B cell (primary cell): ENCODE measurements at regions of chr21 and their contacts with region 1.

Region 1: DNA sequence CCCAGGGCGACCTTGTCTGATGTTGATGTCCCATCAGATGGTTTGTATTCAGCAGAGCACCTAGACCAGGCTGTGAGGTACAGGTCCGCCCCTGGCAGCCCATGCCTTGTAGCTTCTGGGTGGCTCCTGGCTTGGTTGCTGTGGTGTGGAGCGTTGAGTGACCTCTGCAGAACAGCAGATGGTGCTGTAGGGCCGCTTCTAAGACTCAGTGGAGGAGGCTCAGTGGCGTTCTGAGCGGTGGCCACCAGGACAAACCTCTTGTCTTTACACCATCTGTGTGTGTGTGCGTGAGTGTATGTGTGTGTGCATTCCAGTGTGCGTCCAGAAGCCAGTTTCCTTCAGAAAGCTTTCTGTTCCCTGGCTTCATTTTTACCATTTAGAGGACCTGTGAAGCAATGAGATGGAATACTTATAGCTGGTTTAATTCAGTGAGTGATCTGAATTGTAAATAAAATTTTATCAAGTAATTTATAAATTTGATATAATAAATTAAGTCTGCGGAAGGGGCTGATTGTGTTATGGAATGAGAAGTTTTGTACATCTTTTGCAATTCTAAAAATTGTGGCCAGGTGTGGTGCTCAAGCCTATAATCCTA is 66.1 kb downstream of the ADARB1 start:
- DNase-seq: peak; percentile 80
- ATAC-seq: peak; percentile 93
- H3K4me3 ChIP-seq: no peak overlapping the region
- H3K4me3 Mint-ChIP-seq: no peak overlapping the region
- H3K27ac ChIP-seq: no peak overlapping the region
- H3K27ac Mint-ChIP-seq: peak overlapping the region; percentile 57
- H3K4me1 ChIP-seq: peaks cover 0 to 8% of the 10 kb centered on the region in 2 donors
- H3K4me1 Mint-ChIP-seq: peaks cover 17% of the 10 kb centered on the region
- H3K27me3 ChIP-seq: no peaks in the 10 kb centered on the region
- H3K27me3 Mint-ChIP-seq: no peaks in the 10 kb centered on the region
- CTCF ChIP-seq: peak; percentile 71

Region 2: DNA sequence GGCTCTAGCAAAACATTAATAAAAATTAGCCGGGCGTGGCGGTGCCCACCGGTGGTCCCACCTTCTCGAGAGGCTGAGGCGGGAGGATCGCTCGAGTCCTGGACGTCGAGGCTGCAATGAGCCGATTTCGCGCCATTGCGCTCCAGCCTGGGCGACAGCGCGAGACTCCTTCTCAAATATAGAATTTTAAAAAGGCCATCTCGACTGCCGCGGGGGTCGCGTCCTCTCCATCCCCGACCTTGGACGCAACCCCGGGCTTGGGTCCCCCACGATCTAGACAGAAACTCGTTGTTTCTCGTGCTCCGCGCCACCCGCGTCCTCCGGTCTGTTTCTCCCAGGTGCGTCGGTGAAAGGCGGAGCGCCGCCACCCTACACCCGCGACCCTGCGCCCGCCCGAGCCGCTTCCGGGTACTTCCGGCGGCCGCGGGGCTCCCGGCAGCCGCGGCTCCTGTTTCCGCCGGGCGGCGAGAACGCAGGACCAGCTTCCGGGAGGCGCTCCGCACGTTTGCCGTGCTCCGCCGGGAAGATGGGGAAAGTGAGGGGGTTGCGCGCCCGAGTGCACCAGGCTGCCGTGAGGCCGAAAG is 200.8 kb before region 1 on chr21 and contains the start of gene SLX9:
- CTCF ChIA-PET with region 1: interaction called, 355 read pairs
- POLR2A ChIA-PET with region 1: no interaction called
- intact Hi-C with region 1: no loop called
- DNase-seq: peak; percentile 84
- ATAC-seq: peak; percentile 87
- H3K4me3 ChIP-seq: peak within 1 kb of the TSS; percentile 54 to 80 (median 74)
- H3K4me3 Mint-ChIP-seq: peak within 1 kb of the TSS; percentile 89
- H3K27ac ChIP-seq: peak within 1 kb of the TSS in 1 of 2 donors; percentile 57
- H3K27ac Mint-ChIP-seq: peak within 1 kb of the TSS; percentile 86
- H3K4me1 ChIP-seq: peaks cover 26 to 40% of the 10 kb centered on the region in 2 donors
- H3K4me1 Mint-ChIP-seq: peaks cover 43% of the 10 kb centered on the region
- H3K27me3 ChIP-seq: no peaks in the 10 kb centered on the region
- H3K27me3 Mint-ChIP-seq: no peaks in the 10 kb centered on the region
- CTCF ChIP-seq: no peak
- total RNA-seq, gene SLX9: 12.6 and 15.9 TPM in 2 replicates

Region 3: GRCh38 chr21:45074048-45074817 is 66.2 kb before region 1 on chr21 and contains the start of gene ADARB1:
- CTCF ChIA-PET with region 1: interaction called, 38 read pairs
- POLR2A ChIA-PET with region 1: no interaction called
- intact Hi-C with region 1: no loop called
- DNase-seq: peak; percentile 84
- ATAC-seq: peak; percentile 87
- H3K4me3 ChIP-seq: peak within 1 kb of the TSS; percentile 69 to 86 (median 75)
- H3K4me3 Mint-ChIP-seq: peak within 1 kb of the TSS; percentile 90
- H3K27ac ChIP-seq: peak within 1 kb of the TSS in 1 of 2 donors; percentile 51
- H3K27ac Mint-ChIP-seq: peak within 1 kb of the TSS; percentile 84
- H3K4me1 ChIP-seq: peaks cover 37 to 44% of the 10 kb centered on the region in 2 donors
- H3K4me1 Mint-ChIP-seq: peaks cover 38% of the 10 kb centered on the region
- H3K27me3 ChIP-seq: no peaks in the 10 kb centered on the region
- H3K27me3 Mint-ChIP-seq: no peaks in the 10 kb centered on the region
- CTCF ChIP-seq: no peak
- total RNA-seq, gene ADARB1: 17.1 and 23.2 TPM in 2 replicates

Region 4: DNA sequence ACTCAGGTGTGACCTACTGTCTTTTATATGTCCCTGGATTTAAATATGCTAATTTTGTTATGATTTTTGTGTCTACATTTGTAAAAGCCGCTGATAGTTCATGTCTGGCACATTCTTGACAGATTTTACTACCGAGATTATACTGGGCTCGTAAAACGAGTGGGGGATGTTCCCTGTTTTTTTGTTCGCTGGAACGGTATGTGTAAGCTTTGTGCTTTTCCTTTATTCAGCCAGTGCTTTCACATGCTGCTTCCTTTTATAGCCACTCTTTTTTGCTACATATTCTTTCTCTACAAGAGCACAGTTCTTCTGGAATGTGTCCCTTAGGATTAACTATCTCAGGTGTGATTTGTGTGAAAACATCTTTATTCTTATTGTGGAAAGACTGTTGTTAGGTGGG is 19.5 kb before region 1 on chr21:
- CTCF ChIA-PET with region 1: interaction called, 183 read pairs
- POLR2A ChIA-PET with region 1: no interaction called
- intact Hi-C with region 1: no loop called
- DNase-seq: no peak
- ATAC-seq: no peak
- H3K4me3 ChIP-seq: no peak overlapping the region
- H3K4me3 Mint-ChIP-seq: no peak overlapping the region
- H3K27ac ChIP-seq: no peak overlapping the region
- H3K27ac Mint-ChIP-seq: no peak overlapping the region
- H3K4me1 ChIP-seq: peaks cover 72 to 78% of the 10 kb centered on the region in 2 donors
- H3K4me1 Mint-ChIP-seq: peaks cover 86% of the 10 kb centered on the region
- H3K27me3 ChIP-seq: no peaks in the 10 kb centered on the region
- H3K27me3 Mint-ChIP-seq: no peaks in the 10 kb centered on the region
- CTCF ChIP-seq: no peak

Region 5: GRCh38 chr21:45158491-45159423 is 18.3 kb after region 1 on chr21:
- CTCF ChIA-PET with region 1: interaction called, 36 read pairs
- POLR2A ChIA-PET with region 1: interaction called, 3 read pairs
- intact Hi-C with region 1: no loop called
- DNase-seq: peak; percentile 53
- ATAC-seq: peak; percentile 61
- H3K4me3 ChIP-seq: no peak overlapping the region
- H3K4me3 Mint-ChIP-seq: no peak overlapping the region
- H3K27ac ChIP-seq: peak overlapping the region in 1 of 2 donors; percentile 53
- H3K27ac Mint-ChIP-seq: peak overlapping the region; percentile 62
- H3K4me1 ChIP-seq: peaks cover 24 to 25% of the 10 kb centered on the region in 2 donors
- H3K4me1 Mint-ChIP-seq: peaks cover 38% of the 10 kb centered on the region
- H3K27me3 ChIP-seq: no peaks in the 10 kb centered on the region
- H3K27me3 Mint-ChIP-seq: no peaks in the 10 kb centered on the region
- CTCF ChIP-seq: no peak

Region 6: DNA sequence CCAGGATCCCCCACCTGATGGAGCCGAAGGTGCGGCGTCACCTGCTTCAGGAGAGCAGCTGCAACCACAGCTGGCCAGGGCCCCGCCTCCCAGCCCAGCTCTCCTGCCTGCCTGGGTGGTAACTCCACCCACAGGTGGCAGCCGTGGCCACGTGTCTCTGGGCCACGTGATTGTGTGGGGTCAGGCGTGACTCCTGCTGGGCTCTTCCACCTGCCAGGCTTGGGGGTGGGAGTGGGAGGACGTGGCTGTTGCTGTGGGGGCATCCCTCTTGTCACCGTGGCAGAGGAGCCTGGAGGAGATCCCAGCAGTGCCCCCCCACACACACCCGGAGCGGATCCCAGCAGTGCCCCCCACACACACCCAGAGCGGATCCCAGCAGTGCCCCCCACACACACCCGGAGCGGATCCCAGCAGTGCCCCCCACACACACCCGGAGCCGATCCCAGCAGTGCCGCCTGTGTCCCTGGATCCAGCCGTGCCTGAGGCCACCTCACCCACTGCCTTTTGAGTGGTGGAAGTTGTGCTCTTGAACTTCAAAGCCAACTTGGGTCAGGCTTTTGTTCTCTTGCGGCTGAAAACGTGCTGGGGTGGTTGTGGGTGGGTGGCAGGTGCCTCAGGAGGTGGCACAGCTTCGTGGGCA is 115.1 kb after region 1 on chr21:
- CTCF ChIA-PET with region 1: no interaction called
- POLR2A ChIA-PET with region 1: no interaction called
- intact Hi-C with region 1: no loop called
- DNase-seq: peak; percentile 32
- ATAC-seq: peak; percentile 45
- H3K4me3 ChIP-seq: no peak overlapping the region
- H3K4me3 Mint-ChIP-seq: no peak overlapping the region
- H3K27ac ChIP-seq: no peak overlapping the region
- H3K27ac Mint-ChIP-seq: no peak overlapping the region
- H3K4me1 ChIP-seq: peaks cover 6 to 15% of the 10 kb centered on the region in 2 donors
- H3K4me1 Mint-ChIP-seq: peaks cover 5% of the 10 kb centered on the region
- H3K27me3 ChIP-seq: peaks cover 0 to 15% (median 4%) of the 10 kb centered on the region in 4 experiments
- H3K27me3 Mint-ChIP-seq: peaks cover 12% of the 10 kb centered on the region
- CTCF ChIP-seq: no peak

Region 7: DNA sequence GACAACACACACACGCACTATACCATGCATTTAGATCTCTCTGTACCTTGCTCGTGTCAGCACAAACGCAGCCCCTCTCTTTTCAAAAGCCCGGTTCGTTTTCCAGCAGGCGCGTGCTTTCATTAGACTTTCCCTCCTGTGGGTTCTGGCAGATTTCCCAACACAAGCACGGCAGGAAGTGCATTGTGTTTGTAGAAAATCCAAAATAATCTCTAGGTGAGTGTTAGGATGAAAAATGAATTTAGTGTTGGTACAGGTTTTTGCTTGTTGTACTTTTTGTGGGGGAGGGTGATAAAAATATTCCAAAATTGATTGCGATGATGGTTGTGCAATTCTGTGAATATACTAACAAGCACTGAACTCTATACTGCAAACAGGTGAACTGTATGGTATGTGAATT is 201.3 kb after region 1 on chr21:
- CTCF ChIA-PET with region 1: no interaction called
- POLR2A ChIA-PET with region 1: no interaction called
- intact Hi-C with region 1: no loop called
- DNase-seq: no peak
- ATAC-seq: no peak
- H3K4me3 ChIP-seq: no peak overlapping the region
- H3K4me3 Mint-ChIP-seq: no peak overlapping the region
- H3K27ac ChIP-seq: no peak overlapping the region
- H3K27ac Mint-ChIP-seq: no peak overlapping the region
- H3K4me1 ChIP-seq: no peaks in the 10 kb centered on the region
- H3K4me1 Mint-ChIP-seq: no peaks in the 10 kb centered on the region
- H3K27me3 ChIP-seq: peaks cover 0 to 7% (median 1%) of the 10 kb centered on the region in 4 experiments
- H3K27me3 Mint-ChIP-seq: peaks cover 17% of the 10 kb centered on the region
- CTCF ChIP-seq: no peak

Region 8: GRCh38 chr21:45439161-45439872 is 298.9 kb after region 1 on chr21:
- CTCF ChIA-PET with region 1: interaction called, 74 read pairs
- POLR2A ChIA-PET with region 1: no interaction called
- intact Hi-C with region 1: no loop called
- DNase-seq: peak; percentile 89
- ATAC-seq: peak; percentile 88
- H3K4me3 ChIP-seq: peak overlapping the region in 3 of 5 experiments; percentile 34 to 50 (median 39)
- H3K4me3 Mint-ChIP-seq: peak overlapping the region; percentile 66
- H3K27ac ChIP-seq: no peak overlapping the region
- H3K27ac Mint-ChIP-seq: peak overlapping the region; percentile 26
- H3K4me1 ChIP-seq: peaks cover 9 to 11% of the 10 kb centered on the region in 2 donors
- H3K4me1 Mint-ChIP-seq: peaks cover 6% of the 10 kb centered on the region
- H3K27me3 ChIP-seq: peaks cover 0 to 27% (median 2%) of the 10 kb centered on the region in 4 experiments
- H3K27me3 Mint-ChIP-seq: peaks cover 13% of the 10 kb centered on the region
- CTCF ChIP-seq: peak; percentile 96

Region 9: GRCh38 chr21:45820171-45821091 is 680.0 kb after region 1 on chr21:
- CTCF ChIA-PET with region 1: interaction called, 12 read pairs
- POLR2A ChIA-PET with region 1: no interaction called
- intact Hi-C with region 1: no loop called
- DNase-seq: peak; percentile 80
- ATAC-seq: peak; percentile 68
- H3K4me3 ChIP-seq: no peak overlapping the region
- H3K4me3 Mint-ChIP-seq: no peak overlapping the region
- H3K27ac ChIP-seq: no peak overlapping the region
- H3K27ac Mint-ChIP-seq: peak overlapping the region; percentile 43
- H3K4me1 ChIP-seq: no peaks in the 10 kb centered on the region
- H3K4me1 Mint-ChIP-seq: peaks cover 2% of the 10 kb centered on the region
- H3K27me3 ChIP-seq: no peaks in the 10 kb centered on the region
- H3K27me3 Mint-ChIP-seq: peaks cover 38% of the 10 kb centered on the region
- CTCF ChIP-seq: peak; percentile 78